Esophagus squamous epithelium (tissue), 5 donors: ENCODE measurements at regions of chr10 and their contacts with region 1.

Region 1: GRCh38 chr10:103416436-103417147 is 20.2 kb downstream of the PDCD11 start:
- DNase-seq: peak; percentile 19
- H3K4me3 ChIP-seq: no peak overlapping the region
- H3K27ac ChIP-seq: no peak overlapping the region
- H3K4me1 ChIP-seq: no peaks in the 10 kb centered on the region
- H3K27me3 ChIP-seq: no peaks in the 10 kb centered on the region
- CTCF ChIP-seq: peak; percentile 49 to 65 (median 60)
- POLR2A ChIP-seq: no peak

Region 2: GRCh38 chr10:103481974-103482531 is 65.5 kb after region 1 on chr10:
- intact Hi-C with region 1: loop called (anchors 5 kb)
- DNase-seq: no peak
- H3K4me3 ChIP-seq: no peak overlapping the region
- H3K27ac ChIP-seq: no peak overlapping the region
- H3K4me1 ChIP-seq: peaks cover 0 to 24% (median 6%) of the 10 kb centered on the region in 3 donors
- H3K27me3 ChIP-seq: no peaks in the 10 kb centered on the region
- CTCF ChIP-seq: peak; percentile 46 to 62 (median 58)
- POLR2A ChIP-seq: no peak